ENCODE measurements at regions of chr9 and their contacts with region 1.

Region 1: GRCh38 chr9:70297141-70297540 is 38.4 kb downstream of the SMC5 start:
- DNase-seq: no peak
- ATAC-seq: no peak
- H3K4me3 ChIP-seq: no peak overlapping the region
- H3K27ac ChIP-seq: no peak overlapping the region
- H3K4me1 ChIP-seq: peaks cover 0 to 6% (median 0%) of the 10 kb centered on the region in 12 donors
- H3K27me3 ChIP-seq: no peaks in the 10 kb centered on the region
- CTCF ChIP-seq: no peak
- POLR2A ChIP-seq: no peak

Region 2: DNA sequence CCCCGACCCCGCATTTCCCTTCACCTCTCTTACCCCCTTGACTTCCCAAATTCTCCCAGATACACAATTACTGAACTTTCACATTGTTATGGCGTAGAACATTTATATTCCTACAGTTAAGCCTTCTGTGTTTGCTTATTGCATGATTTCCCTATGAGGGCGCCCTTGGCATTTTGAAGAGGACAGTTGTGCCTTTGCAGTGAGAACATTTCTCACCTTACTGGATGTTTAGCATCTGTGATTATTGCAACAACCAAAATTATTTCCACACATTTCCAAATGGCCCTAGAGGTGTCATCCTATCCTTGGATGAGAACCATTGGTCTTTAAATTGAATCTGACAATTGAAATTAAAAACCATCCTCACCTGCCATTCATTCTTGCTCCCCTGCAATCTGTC is 149.5 kb before region 1 on chr9:
- intact Hi-C with region 1: no loop called
- DNase-seq: no peak
- ATAC-seq: no peak
- H3K4me3 ChIP-seq: no peak overlapping the region
- H3K27ac ChIP-seq: no peak overlapping the region
- H3K4me1 ChIP-seq: no peaks in the 10 kb centered on the region
- H3K27me3 ChIP-seq: no peaks in the 10 kb centered on the region
- CTCF ChIP-seq: no peak
- POLR2A ChIP-seq: no peak

Region 3: DNA sequence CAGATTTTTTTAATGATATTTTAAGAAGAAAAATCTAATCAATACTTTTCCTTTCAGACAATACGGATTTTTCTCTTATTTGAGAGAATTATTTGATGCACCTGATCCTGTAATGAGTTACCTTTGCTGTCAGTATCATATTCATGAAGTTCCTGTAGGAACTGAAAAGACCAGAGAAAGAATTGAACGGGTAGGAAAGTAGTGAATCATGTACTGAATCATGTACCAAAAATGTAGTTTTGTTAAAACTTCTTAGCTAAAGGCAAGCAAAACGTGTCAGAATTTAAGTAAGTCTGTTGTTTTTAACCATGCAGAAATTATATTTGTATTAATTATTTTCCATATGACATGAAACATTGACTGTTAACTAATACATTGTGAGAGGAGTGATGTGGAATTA is 18.2 kb after region 1 on chr9:
- intact Hi-C with region 1: loop called in 1 of 10 experiments (anchors 1 kb)
- DNase-seq: no peak
- ATAC-seq: no peak
- H3K4me3 ChIP-seq: no peak overlapping the region
- H3K27ac ChIP-seq: no peak overlapping the region
- H3K4me1 ChIP-seq: no peaks in the 10 kb centered on the region
- H3K27me3 ChIP-seq: no peaks in the 10 kb centered on the region
- CTCF ChIP-seq: no peak
- POLR2A ChIP-seq: no peak

Region 4: GRCh38 chr9:70444904-70445303 is 147.8 kb after region 1 on chr9:
- intact Hi-C with region 1: no loop called
- DNase-seq: no peak
- ATAC-seq: no peak
- H3K4me3 ChIP-seq: no peak overlapping the region
- H3K27ac ChIP-seq: no peak overlapping the region
- H3K4me1 ChIP-seq: peaks cover 0 to 3% (median 0%) of the 10 kb centered on the region in 12 donors
- H3K27me3 ChIP-seq: no peaks in the 10 kb centered on the region
- CTCF ChIP-seq: no peak
- POLR2A ChIP-seq: no peak

Measured in heart left ventricle (tissue), 16 donors.